GM12878 (cell line): ENCODE measurements at regions of chr16 and their contacts with region 1.

Region 1: GRCh38 chr16:19886073-19886941 is 1.7 kb upstream of the GPRC5B start:
- DNase-seq: peak; percentile 37
- ATAC-seq: peak; percentile 87
- H3K4me3 ChIP-seq: no peak overlapping the region
- H3K27ac ChIP-seq: no peak overlapping the region
- H3K4me1 ChIP-seq: no peaks in the 10 kb centered on the region
- H3K27me3 ChIP-seq: peaks cover 6 to 15% of the 10 kb centered on the region in 2 experiments
- CTCF ChIP-seq: peak; percentile 99 to 100 (median 100); a peak in 5 of 6 replicates
- EP300 ChIP-seq: no peak
- POLR2A ChIP-seq: no peak
- RAD21 ChIP-seq: peak; percentile 96

Region 2: GRCh38 chr16:19555162-19555937 is 331.0 kb before region 1 on chr16 and contains the start of gene VPS35L:
- CTCF ChIA-PET with region 1: interaction called, 36 read pairs
- POLR2A ChIA-PET with region 1: no interaction called
- RAD21 ChIA-PET with region 1: interaction called, 11 read pairs
- SMC1A ChIA-PET with region 1: interaction called, 17 read pairs
- in situ Hi-C with region 1: loop called (anchors 5 kb)
- intact Hi-C with region 1: loop called (anchors 2 kb)
- DNase-seq: peak; percentile 94
- ATAC-seq: peak; percentile 98
- H3K4me3 ChIP-seq: peak within 1 kb of the TSS; percentile 89
- H3K27ac ChIP-seq: peak within 1 kb of the TSS; percentile 86
- H3K4me1 ChIP-seq: peaks cover 3% of the 10 kb centered on the region
- H3K27me3 ChIP-seq: no peaks in the 10 kb centered on the region
- CTCF ChIP-seq: peak; percentile 79 to 86 (median 86)
- EP300 ChIP-seq: no peak
- POLR2A ChIP-seq: peak; percentile 87
- RAD21 ChIP-seq: no peak
- polyA plus RNA-seq, gene VPS35L: 15.2 to 20.2 TPM

Region 3: GRCh38 chr16:19563377-19563776 is 322.9 kb before region 1 on chr16:
- CTCF ChIA-PET with region 1: interaction called, 18 read pairs
- POLR2A ChIA-PET with region 1: no interaction called
- RAD21 ChIA-PET with region 1: interaction called, 9 read pairs
- SMC1A ChIA-PET with region 1: interaction called, 10 read pairs
- in situ Hi-C with region 1: loop called (anchors 5 kb)
- intact Hi-C with region 1: loop called (anchors 2 kb)
- DNase-seq: no peak
- ATAC-seq: no peak
- H3K4me3 ChIP-seq: no peak overlapping the region
- H3K27ac ChIP-seq: no peak overlapping the region
- H3K4me1 ChIP-seq: no peaks in the 10 kb centered on the region
- H3K27me3 ChIP-seq: no peaks in the 10 kb centered on the region
- CTCF ChIP-seq: no peak
- EP300 ChIP-seq: no peak
- POLR2A ChIP-seq: no peak
- RAD21 ChIP-seq: no peak

Region 4: DNA sequence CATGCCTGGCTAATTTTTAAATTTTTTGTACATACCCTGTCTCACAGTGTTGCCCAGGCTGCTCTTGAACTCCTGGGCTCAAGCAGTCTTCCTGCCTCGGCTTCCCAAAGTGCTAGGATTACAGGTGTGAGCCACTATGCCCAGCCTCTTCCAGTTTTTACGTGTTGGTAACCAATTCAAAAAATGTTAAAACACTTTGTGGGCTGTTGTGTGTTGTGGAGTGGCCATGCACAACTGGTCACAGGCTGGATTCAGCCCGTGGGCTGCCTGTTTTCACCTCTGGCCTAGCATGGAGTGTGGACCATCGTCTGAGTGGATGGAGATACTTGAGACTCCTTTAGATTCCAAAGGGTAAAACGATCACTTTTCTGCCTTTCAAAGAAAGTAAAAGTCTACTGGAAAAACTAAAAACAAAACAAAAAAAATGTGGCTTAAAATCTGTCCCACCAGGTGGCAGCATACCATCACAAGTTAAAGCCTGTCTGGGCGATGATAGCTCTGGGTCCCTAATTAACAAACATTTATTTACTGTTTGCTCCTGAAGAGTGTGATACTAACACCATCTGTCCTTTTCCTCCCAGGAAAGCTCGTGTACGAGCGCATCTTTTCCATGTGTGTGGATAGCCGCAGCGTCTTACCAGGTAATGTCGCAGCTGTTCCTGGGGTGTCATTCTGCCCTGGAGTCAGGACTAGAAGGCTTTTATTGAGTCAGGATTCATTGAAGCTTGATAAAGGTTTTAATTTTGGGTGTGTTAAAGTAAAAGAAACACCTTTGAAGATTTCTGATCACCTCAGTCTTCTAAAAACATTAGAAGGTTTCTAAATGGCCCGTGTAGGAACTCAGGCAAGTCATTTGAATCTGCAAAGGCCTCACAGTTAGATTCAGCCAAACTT is 285.0 kb before region 1 on chr16:
- CTCF ChIA-PET with region 1: interaction called, 149 read pairs
- POLR2A ChIA-PET with region 1: no interaction called
- RAD21 ChIA-PET with region 1: interaction called, 30 read pairs
- SMC1A ChIA-PET with region 1: interaction called, 61 read pairs
- in situ Hi-C with region 1: loop called (anchors 5 kb)
- intact Hi-C with region 1: loop called (anchors 1 kb)
- DNase-seq: no peak
- ATAC-seq: 0 out of 3 replicates have a peak, but pooled peaks have one; percentile 27
- H3K4me3 ChIP-seq: no peak overlapping the region
- H3K27ac ChIP-seq: no peak overlapping the region
- H3K4me1 ChIP-seq: no peaks in the 10 kb centered on the region
- H3K27me3 ChIP-seq: no peaks in the 10 kb centered on the region
- CTCF ChIP-seq: peak; percentile 37 to 64 (median 41); a peak in 4 of 6 replicates
- EP300 ChIP-seq: no peak
- POLR2A ChIP-seq: no peak
- RAD21 ChIP-seq: peak; percentile 62

Region 5: GRCh38 chr16:19607616-19608280 is 278.6 kb before region 1 on chr16:
- CTCF ChIA-PET with region 1: interaction called, 149 read pairs
- POLR2A ChIA-PET with region 1: no interaction called
- RAD21 ChIA-PET with region 1: interaction called, 30 read pairs
- SMC1A ChIA-PET with region 1: interaction called, 10 read pairs
- in situ Hi-C with region 1: loop called (anchors 5 kb)
- intact Hi-C with region 1: no loop called
- DNase-seq: no peak
- ATAC-seq: no peak
- H3K4me3 ChIP-seq: no peak overlapping the region
- H3K27ac ChIP-seq: no peak overlapping the region
- H3K4me1 ChIP-seq: no peaks in the 10 kb centered on the region
- H3K27me3 ChIP-seq: no peaks in the 10 kb centered on the region
- CTCF ChIP-seq: no peak
- EP300 ChIP-seq: no peak
- POLR2A ChIP-seq: no peak
- RAD21 ChIP-seq: no peak

Region 6: GRCh38 chr16:19717771-19718602 is 168.3 kb before region 1 on chr16 and contains the starts of genes IQCK and KNOP1:
- CTCF ChIA-PET with region 1: interaction called, 3 read pairs
- POLR2A ChIA-PET with region 1: no interaction called
- RAD21 ChIA-PET with region 1: no interaction called
- SMC1A ChIA-PET with region 1: no interaction called
- in situ Hi-C with region 1: no loop called
- intact Hi-C with region 1: loop called (anchors 2 kb)
- DNase-seq: peak; percentile 51
- ATAC-seq: peak; percentile 96
- H3K4me3 ChIP-seq: peak within 1 kb of the TSS; percentile 97
- H3K27ac ChIP-seq: peak within 1 kb of the TSS; percentile 73
- H3K4me1 ChIP-seq: peaks cover 4% of the 10 kb centered on the region; the same call in 1 of the 2 replicates
- H3K27me3 ChIP-seq: no peaks in the 10 kb centered on the region
- CTCF ChIP-seq: no peak
- EP300 ChIP-seq: no peak
- POLR2A ChIP-seq: peak; percentile 88
- RAD21 ChIP-seq: no peak
- polyA plus RNA-seq, gene IQCK: 1.5 to 4.2 TPM
- polyA plus RNA-seq, gene KNOP1: 35.1 to 46.4 TPM

Region 7: GRCh38 chr16:20221215-20221614 is 334.9 kb after region 1 on chr16:
- CTCF ChIA-PET with region 1: no interaction called
- POLR2A ChIA-PET with region 1: no interaction called
- RAD21 ChIA-PET with region 1: no interaction called
- SMC1A ChIA-PET with region 1: no interaction called
- in situ Hi-C with region 1: no loop called
- intact Hi-C with region 1: no loop called
- DNase-seq: no peak
- ATAC-seq: no peak
- H3K4me3 ChIP-seq: no peak overlapping the region
- H3K27ac ChIP-seq: no peak overlapping the region
- H3K4me1 ChIP-seq: no peaks in the 10 kb centered on the region
- H3K27me3 ChIP-seq: no peaks in the 10 kb centered on the region
- CTCF ChIP-seq: no peak
- EP300 ChIP-seq: no peak
- POLR2A ChIP-seq: no peak
- RAD21 ChIP-seq: no peak